Naive thymus-derived CD4-positive, alpha-beta T cell (primary cell): ENCODE measurements at regions of chr17 and their contacts with region 1.

Region 1: DNA sequence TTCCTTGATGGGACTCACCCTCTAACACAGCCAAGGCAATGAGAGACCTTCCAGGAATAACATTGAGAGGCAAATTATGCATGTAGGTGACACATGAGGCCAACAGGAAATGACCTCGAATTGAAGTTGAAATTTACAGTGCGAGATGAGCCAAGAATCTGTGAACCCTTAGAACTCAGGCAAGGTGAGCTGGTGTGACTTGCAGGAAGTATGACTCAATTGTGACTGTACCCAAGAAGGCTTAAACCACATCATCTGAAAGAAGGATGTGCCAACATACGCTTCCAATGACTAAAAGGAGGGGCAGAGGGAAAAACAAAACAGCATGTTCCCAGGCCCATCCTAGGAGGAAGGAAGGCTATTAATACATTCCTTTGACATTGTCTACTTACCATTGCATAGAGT is 44.8 kb downstream of the PITPNC1 start:
- DNase-seq: peak in 8 of 9 donors; percentile 46 to 86 (median 82)
- ATAC-seq: peak; percentile 97
- H3K4me3 ChIP-seq: peak overlapping the region; percentile 19
- H3K4me3 Mint-ChIP-seq: peak overlapping the region; percentile 8 to 79 (median 69)
- H3K27ac ChIP-seq: peak overlapping the region; percentile 82
- H3K27ac Mint-ChIP-seq: peak overlapping the region; percentile 90 to 99 (median 97)
- H3K4me1 ChIP-seq: peaks cover 51 to 71% of the 10 kb centered on the region in 2 donors
- H3K4me1 Mint-ChIP-seq: peaks cover 54 to 100% (median 87%) of the 10 kb centered on the region in 7 donors
- H3K27me3 ChIP-seq: no peaks in the 10 kb centered on the region
- H3K27me3 Mint-ChIP-seq: no peaks in the 10 kb centered on the region

Region 2: DNA sequence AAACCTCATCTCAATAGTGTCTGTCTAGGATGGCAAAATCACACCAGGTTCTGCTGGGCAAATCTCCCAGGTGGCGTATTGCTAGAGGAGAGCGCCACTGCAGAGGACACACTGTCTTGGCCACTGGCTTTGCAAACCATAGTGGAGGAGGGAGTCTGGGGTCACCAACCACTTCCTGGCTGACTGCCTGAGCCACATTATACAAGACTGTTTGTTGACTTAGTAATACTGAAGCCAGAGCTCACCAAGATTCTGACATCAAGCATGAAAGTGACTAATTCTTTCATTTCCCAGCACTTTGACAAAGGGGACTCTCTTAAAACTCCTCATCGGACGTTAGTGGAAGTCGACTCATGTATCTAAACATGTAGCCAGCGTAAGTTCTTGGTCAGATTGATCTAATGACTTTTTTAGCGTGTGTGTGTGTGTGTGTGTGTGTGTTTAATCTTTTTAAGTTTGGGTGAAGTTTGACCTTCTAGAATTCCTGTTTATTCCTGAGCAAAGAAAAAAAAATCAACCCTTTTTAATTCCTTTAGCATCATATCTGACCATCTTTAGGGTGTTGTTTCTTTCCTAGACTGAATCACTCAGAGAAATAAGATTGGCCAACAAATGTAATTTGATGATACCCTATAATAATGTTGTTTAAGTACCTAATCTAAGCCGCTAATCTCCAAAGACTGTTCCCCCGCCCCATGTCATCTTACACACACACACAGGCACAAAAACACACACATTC is 31.1 kb before region 1 on chr17:
- CTCF ChIA-PET with region 1: interaction called, 8 read pairs
- POLR2A ChIA-PET with region 1: interaction called, 9 read pairs
- intact Hi-C with region 1: loop called (anchors 1 to 2 kb)
- DNase-seq: peak in 6 of 9 donors; percentile 50 to 74 (median 62)
- ATAC-seq: peak; percentile 89
- H3K4me3 ChIP-seq: peak overlapping the region; percentile 34
- H3K4me3 Mint-ChIP-seq: peak overlapping the region; percentile 66 to 90 (median 84)
- H3K27ac ChIP-seq: peak overlapping the region; percentile 76
- H3K27ac Mint-ChIP-seq: peak overlapping the region; percentile 85 to 99 (median 95)
- H3K4me1 ChIP-seq: peaks cover 29 to 46% of the 10 kb centered on the region in 2 donors
- H3K4me1 Mint-ChIP-seq: peaks cover 47 to 95% (median 73%) of the 10 kb centered on the region in 7 donors
- H3K27me3 ChIP-seq: no peaks in the 10 kb centered on the region
- H3K27me3 Mint-ChIP-seq: no peaks in the 10 kb centered on the region

Region 3: GRCh38 chr17:67400193-67400592 is 21.7 kb before region 1 on chr17:
- CTCF ChIA-PET with region 1: interaction called, 3 read pairs
- POLR2A ChIA-PET with region 1: interaction called, 7 read pairs
- intact Hi-C with region 1: loop called (anchors 1 to 2 kb)
- DNase-seq: peak in 6 of 9 donors; percentile 64 to 80 (median 76)
- ATAC-seq: peak; percentile 62
- H3K4me3 ChIP-seq: peak overlapping the region; percentile 32
- H3K4me3 Mint-ChIP-seq: peak overlapping the region; percentile 66 to 93 (median 83)
- H3K27ac ChIP-seq: peak overlapping the region; percentile 83
- H3K27ac Mint-ChIP-seq: peak overlapping the region; percentile 82 to 100 (median 99)
- H3K4me1 ChIP-seq: peaks cover 9 to 77% of the 10 kb centered on the region in 2 donors
- H3K4me1 Mint-ChIP-seq: peaks cover 32 to 88% (median 77%) of the 10 kb centered on the region in 7 donors
- H3K27me3 ChIP-seq: no peaks in the 10 kb centered on the region
- H3K27me3 Mint-ChIP-seq: no peaks in the 10 kb centered on the region

Region 4: GRCh38 chr17:67469208-67469895 is 47.5 kb after region 1 on chr17:
- CTCF ChIA-PET with region 1: interaction called, 13 read pairs
- POLR2A ChIA-PET with region 1: interaction called, 41 read pairs
- intact Hi-C with region 1: no loop called
- DNase-seq: peak in 2 of 9 donors; percentile 28 to 57
- ATAC-seq: peak; percentile 58
- H3K4me3 ChIP-seq: peak overlapping the region; percentile 53
- H3K4me3 Mint-ChIP-seq: peak overlapping the region; percentile 66 to 90 (median 82)
- H3K27ac ChIP-seq: peak overlapping the region; percentile 74
- H3K27ac Mint-ChIP-seq: peak overlapping the region; percentile 82 to 97 (median 92)
- H3K4me1 ChIP-seq: peaks cover 32 to 63% of the 10 kb centered on the region in 2 donors
- H3K4me1 Mint-ChIP-seq: peaks cover 39 to 84% (median 65%) of the 10 kb centered on the region in 7 donors
- H3K27me3 ChIP-seq: no peaks in the 10 kb centered on the region
- H3K27me3 Mint-ChIP-seq: no peaks in the 10 kb centered on the region

Region 5: DNA sequence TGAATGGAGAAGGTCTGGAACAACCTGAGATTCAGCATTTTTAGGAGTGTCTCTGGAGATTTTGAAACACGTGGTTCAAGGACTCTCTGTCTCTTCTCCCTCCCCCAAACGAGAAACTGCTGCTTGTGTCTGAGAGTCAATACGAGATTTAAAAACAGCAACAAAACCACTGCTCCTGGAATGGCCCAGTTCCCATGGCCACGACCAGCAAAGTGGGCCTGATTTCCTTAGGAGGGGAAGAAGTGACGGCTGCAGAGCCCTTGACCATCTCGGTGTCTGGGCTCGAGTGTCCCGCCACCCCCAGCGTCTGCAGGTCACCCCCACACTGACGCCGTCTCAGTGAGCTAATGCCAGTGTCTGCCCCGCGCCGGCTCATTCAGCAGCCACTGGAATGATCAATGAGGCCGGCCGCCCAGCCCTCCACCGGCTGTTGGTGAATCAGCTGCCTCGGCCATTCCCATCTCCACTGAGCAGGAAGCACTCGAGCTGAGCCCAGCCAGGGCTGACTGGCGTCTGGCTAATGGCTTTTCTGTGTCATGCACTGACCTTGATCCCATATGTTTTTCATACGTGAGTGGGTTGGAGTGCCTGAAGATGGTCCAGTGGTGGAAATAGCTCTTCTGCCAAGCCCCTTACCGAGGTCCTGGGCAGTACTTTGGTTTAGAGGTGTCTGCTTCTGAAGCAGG is 107.0 kb after region 1 on chr17:
- CTCF ChIA-PET with region 1: no interaction called
- POLR2A ChIA-PET with region 1: no interaction called
- intact Hi-C with region 1: no loop called
- DNase-seq: no peak
- ATAC-seq: no peak
- H3K4me3 ChIP-seq: no peak overlapping the region
- H3K4me3 Mint-ChIP-seq: no peak overlapping the region
- H3K27ac ChIP-seq: no peak overlapping the region
- H3K27ac Mint-ChIP-seq: peak overlapping the region in 1 of 9 donors; percentile 56
- H3K4me1 ChIP-seq: no peaks in the 10 kb centered on the region
- H3K4me1 Mint-ChIP-seq: peaks cover 4 to 58% (median 42%) of the 10 kb centered on the region in 7 donors
- H3K27me3 ChIP-seq: no peaks in the 10 kb centered on the region
- H3K27me3 Mint-ChIP-seq: no peaks in the 10 kb centered on the region